Endothelial cell of umbilical vein (primary cell): ENCODE measurements at regions of chr17 and their contacts with region 1.

Region 1: DNA sequence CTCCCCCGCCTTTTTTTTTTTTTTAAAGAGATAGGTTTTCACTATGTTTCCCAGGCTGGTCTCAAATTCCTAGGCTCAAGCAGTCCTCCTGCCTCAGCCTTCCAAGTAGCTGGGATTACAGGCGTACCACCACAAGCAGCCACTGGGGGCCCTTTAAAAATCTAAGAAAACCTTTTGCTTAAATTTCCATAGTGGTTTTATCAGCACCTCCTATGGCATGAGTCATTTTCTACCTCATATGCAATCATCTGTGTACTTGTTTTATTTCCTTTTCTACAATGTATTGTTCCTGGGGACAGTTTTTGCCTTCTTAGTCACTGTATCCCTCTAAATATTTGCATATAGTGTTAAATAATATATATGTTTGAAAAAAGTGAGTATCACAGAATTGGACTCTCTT is 29.2 kb downstream of the GNA13 start:
- DNase-seq: peak; percentile 82
- H3K4me3 ChIP-seq: no peak overlapping the region
- H3K27ac ChIP-seq: peak overlapping the region; percentile 74
- H3K4me1 ChIP-seq: peaks cover 10% of the 10 kb centered on the region
- H3K27me3 ChIP-seq: no peaks in the 10 kb centered on the region
- CTCF ChIP-seq: peak; percentile 26 to 42
- POLR2A ChIP-seq: no peak

Region 2: GRCh38 chr17:64975329-64976087 is 51.8 kb before region 1 on chr17:
- CTCF ChIA-PET with region 1: no interaction called
- POLR2A ChIA-PET with region 1: no interaction called
- dilution Hi-C with region 1: no loop called
- intact Hi-C with region 1: loop called (anchors 2 kb)
- DNase-seq: peak; percentile 96
- H3K4me3 ChIP-seq: peak overlapping the region; percentile 19 to 77 (median 55)
- H3K27ac ChIP-seq: peak overlapping the region; percentile 90
- H3K4me1 ChIP-seq: peaks cover 17% of the 10 kb centered on the region
- H3K27me3 ChIP-seq: no peaks in the 10 kb centered on the region
- CTCF ChIP-seq: no peak
- POLR2A ChIP-seq: peak; percentile 78